Activated CD8-positive, alpha-beta T cell treated with anti-CD3 and anti-CD28 coated beads for 36 hours (primary cell): ENCODE measurements at regions of chr6 and their contacts with region 1.

Region 1: DNA sequence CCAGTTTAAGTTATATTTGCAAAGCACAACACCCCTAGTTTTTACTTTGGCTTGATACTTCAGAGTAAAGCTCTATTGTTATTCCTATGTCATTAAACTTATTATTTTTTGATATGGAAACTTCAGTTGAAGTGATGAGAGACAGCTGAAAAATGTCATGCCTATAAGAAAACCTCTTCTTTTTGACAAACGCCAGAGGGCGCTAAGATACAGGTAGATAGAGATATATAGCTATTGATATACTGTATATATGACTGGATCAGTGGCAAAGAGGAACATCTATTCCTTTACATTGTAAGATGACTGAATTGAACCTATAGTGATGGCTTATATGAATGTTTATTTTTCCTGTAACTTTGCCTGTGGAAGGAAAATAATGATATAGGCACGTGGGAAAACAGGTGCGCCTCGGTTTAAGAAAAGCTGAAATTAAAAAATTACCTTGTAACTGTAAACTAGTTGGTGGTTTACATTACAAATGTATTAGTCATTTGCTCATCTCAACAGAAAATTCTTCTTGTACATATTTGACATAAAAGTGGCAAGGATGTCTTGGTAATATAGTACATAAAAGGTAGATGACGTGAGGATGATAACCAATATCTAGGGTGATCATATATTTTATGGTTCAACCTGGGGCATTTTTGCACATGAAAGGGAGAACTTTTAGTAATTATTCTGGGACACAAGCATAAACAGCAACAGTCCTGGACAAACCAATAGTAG is 74.1 kb downstream of the LAMA4 start:
- DNase-seq: peak; percentile 56
- ATAC-seq: peak; percentile 83
- H3K4me3 Mint-ChIP-seq: no peak overlapping the region
- H3K27ac Mint-ChIP-seq: no peak overlapping the region
- H3K4me1 Mint-ChIP-seq: no peaks in the 10 kb centered on the region
- H3K27me3 Mint-ChIP-seq: peaks cover 14% of the 10 kb centered on the region
- CTCF ChIP-seq: peak; percentile 91

Region 2: DNA sequence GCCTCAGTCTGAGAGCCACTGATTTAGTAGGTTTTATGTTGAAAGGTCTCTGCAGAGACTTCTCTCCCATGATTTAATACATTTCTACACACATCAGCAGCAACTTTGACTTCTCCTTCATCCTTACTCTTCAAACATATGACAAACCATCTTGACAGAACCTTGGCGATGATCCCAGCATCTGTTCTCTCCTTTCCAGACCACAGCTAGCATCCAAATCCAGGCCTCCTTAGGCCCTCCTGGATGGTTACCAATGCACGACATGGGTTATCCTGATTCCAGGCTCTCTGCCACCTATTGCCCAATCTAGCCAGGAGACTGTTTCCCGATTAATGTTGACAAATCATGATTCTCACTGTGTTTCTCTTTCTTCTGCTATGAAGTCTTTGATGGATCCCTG is 57.3 kb after region 1 on chr6:
- CTCF ChIA-PET with region 1: interaction called, 13 read pairs
- POLR2A ChIA-PET with region 1: no interaction called
- intact Hi-C with region 1: no loop called
- DNase-seq: no peak
- ATAC-seq: no peak
- H3K4me3 Mint-ChIP-seq: no peak overlapping the region
- H3K27ac Mint-ChIP-seq: no peak overlapping the region
- H3K4me1 Mint-ChIP-seq: peaks cover 19% of the 10 kb centered on the region
- H3K27me3 Mint-ChIP-seq: peaks cover 18% of the 10 kb centered on the region
- CTCF ChIP-seq: no peak

Region 3: GRCh38 chr6:112289038-112289566 is 108.8 kb after region 1 on chr6:
- CTCF ChIA-PET with region 1: interaction called, 11 read pairs
- POLR2A ChIA-PET with region 1: no interaction called
- intact Hi-C with region 1: no loop called
- DNase-seq: no peak
- ATAC-seq: no peak
- H3K4me3 Mint-ChIP-seq: no peak overlapping the region
- H3K27ac Mint-ChIP-seq: no peak overlapping the region
- H3K4me1 Mint-ChIP-seq: peaks cover 25% of the 10 kb centered on the region
- H3K27me3 Mint-ChIP-seq: peaks cover 23% of the 10 kb centered on the region
- CTCF ChIP-seq: no peak

Region 4: DNA sequence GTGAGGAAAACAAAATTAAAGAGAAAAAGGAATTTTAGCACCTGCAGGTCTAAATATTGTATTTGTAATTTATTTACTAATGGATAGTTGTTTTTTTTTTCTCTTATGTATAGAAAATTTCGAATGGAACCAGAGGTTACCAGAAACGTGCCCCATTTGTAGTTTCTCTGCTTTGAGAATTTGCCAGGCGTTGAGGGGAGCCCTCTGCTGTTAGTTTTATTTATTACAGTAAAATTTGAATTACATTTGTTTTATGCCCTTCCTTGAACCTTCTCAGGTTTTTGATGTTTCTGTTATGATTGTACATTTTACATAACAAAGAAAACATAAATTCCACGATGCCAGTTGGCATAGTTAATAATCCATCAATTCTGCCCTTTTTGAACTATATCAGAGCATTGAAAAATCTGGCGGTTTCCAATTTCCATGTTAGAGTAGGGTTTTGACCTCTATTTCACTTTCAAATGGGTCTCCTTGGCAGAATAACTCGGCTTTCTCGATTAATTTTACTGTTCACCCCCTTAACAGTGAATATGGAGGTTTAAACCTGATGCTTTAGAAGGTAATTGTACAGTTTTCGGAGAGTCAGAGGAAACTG is 131.8 kb after region 1 on chr6:
- CTCF ChIA-PET with region 1: interaction called, 146 read pairs
- POLR2A ChIA-PET with region 1: interaction called, 3 read pairs
- intact Hi-C with region 1: loop called (anchors 1 kb)
- DNase-seq: peak; percentile 14
- ATAC-seq: peak; percentile 49
- H3K4me3 Mint-ChIP-seq: no peak overlapping the region
- H3K27ac Mint-ChIP-seq: no peak overlapping the region
- H3K4me1 Mint-ChIP-seq: peaks cover 5% of the 10 kb centered on the region
- H3K27me3 Mint-ChIP-seq: peaks cover 24% of the 10 kb centered on the region
- CTCF ChIP-seq: peak; percentile 80

Region 5: DNA sequence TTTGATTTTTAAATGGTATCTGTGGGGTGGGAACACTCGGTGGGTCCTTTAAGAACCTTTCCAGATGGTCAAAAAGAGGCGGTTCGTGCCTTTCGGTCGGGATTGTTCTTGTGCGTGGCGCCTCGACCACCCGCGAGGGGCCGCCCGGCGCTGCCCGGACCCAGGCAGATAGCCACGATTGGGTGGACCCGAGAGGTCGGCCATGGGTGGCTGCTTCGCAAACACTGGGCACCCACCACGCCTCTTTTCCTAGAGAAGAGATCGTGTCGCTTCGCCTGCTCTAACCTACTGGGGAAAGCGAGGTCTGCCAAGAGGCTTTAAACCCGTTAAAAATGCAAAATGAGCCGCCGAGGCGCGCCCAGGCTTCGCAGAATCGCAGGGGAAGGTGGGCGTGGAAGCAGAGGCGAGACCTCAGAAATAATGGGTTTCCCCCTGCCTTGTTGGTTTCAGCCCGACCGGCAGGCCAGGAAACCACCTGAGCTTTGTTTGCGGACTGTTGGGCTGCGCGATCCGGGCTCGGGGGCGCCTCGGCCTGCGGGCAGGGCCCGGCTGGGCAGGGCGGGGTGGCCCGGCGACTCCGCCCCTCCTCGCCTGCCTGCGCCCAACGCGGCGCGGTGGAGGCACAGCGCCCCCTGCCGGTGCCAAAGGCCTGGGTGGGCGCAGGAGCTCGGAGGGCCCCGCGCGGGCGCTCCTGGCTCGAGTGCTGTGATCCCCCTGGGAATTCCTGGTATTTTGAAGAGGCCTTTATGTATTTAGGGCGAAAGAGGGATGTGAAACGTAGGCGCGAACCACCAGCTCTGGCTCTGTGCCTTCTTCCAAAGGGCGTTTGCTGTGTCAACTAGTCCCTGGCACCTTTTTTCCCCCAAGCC is 1678.5 kb after region 1 on chr6:
- CTCF ChIA-PET with region 1: interaction called, 10 read pairs
- POLR2A ChIA-PET with region 1: no interaction called
- intact Hi-C with region 1: no loop called
- DNase-seq: peak; percentile 94
- ATAC-seq: peak; percentile 96
- H3K4me3 Mint-ChIP-seq: peak overlapping the region; percentile 45
- H3K27ac Mint-ChIP-seq: no peak overlapping the region
- H3K4me1 Mint-ChIP-seq: peaks cover 16% of the 10 kb centered on the region
- H3K27me3 Mint-ChIP-seq: peaks cover 33% of the 10 kb centered on the region
- CTCF ChIP-seq: peak; percentile 95